Activated CD4-positive, alpha-beta memory T cell treated with anti-CD3 and anti-CD28 coated beads for 36 hours (primary cell): ENCODE measurements at regions of chr13 and their contacts with region 1.

Region 1: GRCh38 chr13:49976314-49977258 is 20.3 kb upstream of the TRIM13 start:
- DNase-seq: peak; percentile 81
- H3K4me3 Mint-ChIP-seq: no peak overlapping the region
- H3K27ac Mint-ChIP-seq: no peak overlapping the region
- H3K4me1 Mint-ChIP-seq: peaks cover 2% of the 10 kb centered on the region
- H3K27me3 Mint-ChIP-seq: no peaks in the 10 kb centered on the region

Region 2: GRCh38 chr13:49560270-49561050 is 416.1 kb before region 1 on chr13:
- CTCF ChIA-PET with region 1: no interaction called
- POLR2A ChIA-PET with region 1: no interaction called
- intact Hi-C with region 1: no loop called
- DNase-seq: no peak
- H3K4me3 Mint-ChIP-seq: no peak overlapping the region
- H3K27ac Mint-ChIP-seq: no peak overlapping the region
- H3K4me1 Mint-ChIP-seq: peaks cover 2% of the 10 kb centered on the region
- H3K27me3 Mint-ChIP-seq: no peaks in the 10 kb centered on the region

Region 3: GRCh38 chr13:49904729-49905456 is 71.7 kb before region 1 on chr13:
- CTCF ChIA-PET with region 1: no interaction called
- POLR2A ChIA-PET with region 1: no interaction called
- intact Hi-C with region 1: no loop called
- DNase-seq: no peak
- H3K4me3 Mint-ChIP-seq: no peak overlapping the region
- H3K27ac Mint-ChIP-seq: no peak overlapping the region
- H3K4me1 Mint-ChIP-seq: no peaks in the 10 kb centered on the region
- H3K27me3 Mint-ChIP-seq: no peaks in the 10 kb centered on the region

Region 4: GRCh38 chr13:49922301-49922700 is 54.3 kb before region 1 on chr13:
- CTCF ChIA-PET with region 1: no interaction called
- POLR2A ChIA-PET with region 1: no interaction called
- intact Hi-C with region 1: no loop called
- DNase-seq: no peak
- H3K4me3 Mint-ChIP-seq: no peak overlapping the region
- H3K27ac Mint-ChIP-seq: no peak overlapping the region
- H3K4me1 Mint-ChIP-seq: no peaks in the 10 kb centered on the region
- H3K27me3 Mint-ChIP-seq: no peaks in the 10 kb centered on the region

Region 5: DNA sequence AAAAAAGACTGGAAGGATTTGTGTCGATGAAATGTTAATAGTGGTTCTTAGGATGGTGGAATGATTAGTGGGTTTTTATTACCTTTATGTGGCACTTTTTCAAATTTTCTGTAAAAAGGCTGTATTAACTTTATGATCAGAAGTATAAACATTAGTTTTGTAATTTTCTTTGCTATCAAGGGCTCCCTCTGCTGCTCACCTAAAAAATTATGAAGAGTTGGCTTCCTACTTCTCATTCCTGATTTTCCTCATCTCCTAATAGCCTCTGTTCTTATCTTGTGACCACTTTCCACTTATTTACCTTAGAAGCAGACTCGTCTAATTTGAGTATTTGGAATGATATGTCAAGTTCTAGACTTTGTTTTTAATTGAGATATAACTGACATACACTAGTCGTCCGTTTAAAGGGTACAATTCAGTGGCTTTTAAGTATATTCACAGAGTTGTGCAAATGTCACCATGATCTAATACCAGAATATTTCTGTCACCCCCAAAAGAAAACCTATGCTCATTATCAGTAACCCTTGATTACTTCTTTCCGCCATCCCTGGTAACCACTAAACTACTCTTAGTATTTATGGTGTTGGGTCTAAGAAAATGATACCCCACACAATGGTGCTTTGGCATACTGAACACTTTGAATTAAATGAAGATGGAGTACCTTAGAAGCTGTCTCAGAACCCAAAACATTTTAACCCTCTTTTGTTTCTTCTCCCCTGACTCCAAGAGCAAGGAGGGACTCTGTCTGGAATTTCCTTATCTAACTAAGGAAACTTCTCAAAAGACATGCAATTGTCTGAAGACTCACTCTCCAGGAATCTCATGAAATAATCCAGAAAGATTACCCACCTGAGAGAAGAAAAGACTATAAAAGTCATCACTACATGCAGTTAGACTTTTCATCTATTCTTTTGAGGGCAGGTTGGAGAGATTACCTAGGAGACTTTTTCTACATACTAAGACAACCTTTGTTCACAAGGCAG is 555.6 kb after region 1 on chr13:
- CTCF ChIA-PET with region 1: interaction called, 8 read pairs
- POLR2A ChIA-PET with region 1: no interaction called
- intact Hi-C with region 1: loop called (anchors 1 kb)
- DNase-seq: no peak
- H3K4me3 Mint-ChIP-seq: no peak overlapping the region
- H3K27ac Mint-ChIP-seq: no peak overlapping the region
- H3K4me1 Mint-ChIP-seq: peaks cover 15% of the 10 kb centered on the region
- H3K27me3 Mint-ChIP-seq: no peaks in the 10 kb centered on the region

Region 6: GRCh38 chr13:50801087-50801931 is 824.7 kb after region 1 on chr13:
- CTCF ChIA-PET with region 1: interaction called, 43 read pairs
- POLR2A ChIA-PET with region 1: no interaction called
- intact Hi-C with region 1: loop called (anchors 1 kb)
- DNase-seq: peak; percentile 70
- H3K4me3 Mint-ChIP-seq: no peak overlapping the region
- H3K27ac Mint-ChIP-seq: no peak overlapping the region
- H3K4me1 Mint-ChIP-seq: peaks cover 4% of the 10 kb centered on the region
- H3K27me3 Mint-ChIP-seq: peaks cover 1% of the 10 kb centered on the region

Region 7: DNA sequence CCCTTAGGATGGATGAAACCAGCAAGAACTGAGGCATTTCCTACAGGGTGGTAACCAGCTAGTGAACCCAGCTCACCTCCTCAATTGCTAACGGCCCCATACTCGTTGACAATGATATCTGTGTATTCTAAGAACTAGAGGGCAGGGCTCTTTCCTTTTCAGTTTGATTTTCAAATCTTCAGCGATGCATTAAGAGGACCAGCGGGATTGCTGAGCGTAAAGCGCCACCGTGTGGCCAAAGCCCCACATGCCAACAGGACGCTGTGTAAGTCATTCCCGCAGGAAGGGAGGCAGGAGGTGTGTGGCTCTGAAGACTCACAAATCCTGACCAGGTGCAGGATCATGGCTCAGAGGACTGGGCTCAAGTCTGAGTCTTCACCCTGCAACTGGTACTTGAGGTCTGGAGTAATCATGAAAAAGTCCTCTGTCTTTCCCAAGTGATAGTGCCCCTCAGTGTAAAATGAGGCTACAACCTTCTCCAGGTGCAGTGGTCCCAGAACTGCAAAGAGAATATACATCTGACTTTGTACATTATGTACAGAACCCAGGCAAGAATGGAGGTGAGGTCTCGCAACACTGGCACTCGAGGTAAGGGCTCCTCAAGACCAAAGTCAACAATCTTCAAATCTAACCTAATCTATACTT is 1093.5 kb after region 1 on chr13:
- CTCF ChIA-PET with region 1: interaction called, 32 read pairs
- POLR2A ChIA-PET with region 1: no interaction called
- intact Hi-C with region 1: loop called (anchors 1 kb)
- DNase-seq: peak; percentile 86
- H3K4me3 Mint-ChIP-seq: no peak overlapping the region
- H3K27ac Mint-ChIP-seq: no peak overlapping the region
- H3K4me1 Mint-ChIP-seq: peaks cover 5% of the 10 kb centered on the region
- H3K27me3 Mint-ChIP-seq: peaks cover 18% of the 10 kb centered on the region